Head of caudate nucleus (tissue), 42 donors: ENCODE measurements at regions of chr4 and their contacts with region 1.

Region 1: DNA sequence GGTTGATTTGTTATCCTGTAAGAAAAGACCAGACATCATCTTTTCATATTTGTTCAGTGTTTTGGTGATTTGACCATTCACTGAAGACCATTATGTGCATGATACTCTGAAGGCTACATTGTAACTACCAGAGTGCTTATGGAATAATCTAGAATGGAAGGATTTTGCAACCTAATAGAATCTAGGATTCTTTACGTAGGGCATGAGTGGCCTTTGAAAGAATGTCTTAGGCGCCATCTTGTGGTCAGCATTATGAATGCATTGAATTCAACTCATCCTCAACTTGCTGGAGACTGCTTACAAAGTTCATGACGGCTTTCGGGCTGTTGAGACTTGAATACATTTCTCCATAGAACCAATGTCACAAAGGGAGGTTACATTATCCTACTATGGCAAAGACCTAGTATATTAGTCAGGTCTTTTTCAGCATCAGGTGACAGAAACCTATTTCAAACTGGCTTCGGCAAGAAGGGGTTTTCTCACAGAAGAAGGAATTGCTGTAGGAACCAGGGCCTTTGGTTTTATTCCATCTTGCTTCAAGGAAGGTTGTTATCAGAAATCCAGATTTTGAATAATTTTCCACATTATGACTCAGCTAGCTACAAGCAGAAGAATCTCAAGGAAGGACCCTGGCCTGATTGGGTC is 104.1 kb downstream of the GPAT3 start:
- DNase-seq: peak in 32 of 42 donors; percentile 19 to 88 (median 66)

Region 2: DNA sequence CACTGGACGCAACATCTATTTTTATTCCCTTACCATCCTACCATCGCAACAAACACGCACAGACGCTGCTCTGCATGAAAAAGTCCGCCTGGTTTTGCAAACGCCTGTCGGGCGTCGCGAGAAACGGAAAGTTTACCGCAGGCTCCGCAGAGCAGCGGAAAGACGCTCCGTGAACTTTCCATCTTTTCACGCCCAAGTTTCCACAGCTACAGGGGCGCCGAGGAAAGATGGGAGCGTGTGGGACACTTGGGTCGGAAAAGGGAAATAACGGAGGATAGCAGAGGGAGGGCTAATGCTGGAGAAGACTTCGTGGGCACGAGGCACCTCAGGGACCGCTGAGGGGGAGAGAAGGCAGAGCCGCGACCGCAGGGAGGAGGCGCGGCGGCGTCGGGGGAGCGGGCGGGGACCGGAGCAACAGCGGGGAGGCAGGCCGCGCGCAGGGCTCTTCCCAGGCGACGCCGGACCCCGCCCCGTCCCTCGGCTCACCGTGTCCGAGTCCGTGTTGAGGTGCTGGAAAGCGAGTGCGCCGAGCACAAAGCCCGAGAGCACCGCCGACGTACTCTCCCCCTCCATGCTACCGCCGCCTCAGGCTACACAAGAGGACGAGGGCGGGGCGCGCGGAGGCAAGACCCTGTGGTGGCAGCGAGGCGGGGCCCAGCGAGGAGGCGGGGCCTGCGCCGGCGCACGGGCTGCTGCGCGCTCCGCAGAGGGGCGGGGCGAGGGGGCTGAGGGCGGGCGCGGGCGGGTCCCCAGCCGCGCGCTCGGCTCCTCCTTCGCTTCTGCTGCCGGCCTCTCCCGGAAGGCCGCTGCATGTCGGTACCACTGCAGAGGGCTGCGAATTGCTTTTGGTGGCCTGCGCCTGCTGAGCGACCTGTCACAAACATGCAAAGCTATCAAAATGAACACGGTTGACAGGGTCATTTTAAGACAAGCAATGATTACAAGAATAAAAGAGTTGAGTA is 155.2 kb before region 1 on chr4 and contains the start of gene ABRAXAS1:
- intact Hi-C with region 1: loop called (anchors 5 kb)
- DNase-seq: peak; percentile 83 to 98 (median 95)

Region 3: DNA sequence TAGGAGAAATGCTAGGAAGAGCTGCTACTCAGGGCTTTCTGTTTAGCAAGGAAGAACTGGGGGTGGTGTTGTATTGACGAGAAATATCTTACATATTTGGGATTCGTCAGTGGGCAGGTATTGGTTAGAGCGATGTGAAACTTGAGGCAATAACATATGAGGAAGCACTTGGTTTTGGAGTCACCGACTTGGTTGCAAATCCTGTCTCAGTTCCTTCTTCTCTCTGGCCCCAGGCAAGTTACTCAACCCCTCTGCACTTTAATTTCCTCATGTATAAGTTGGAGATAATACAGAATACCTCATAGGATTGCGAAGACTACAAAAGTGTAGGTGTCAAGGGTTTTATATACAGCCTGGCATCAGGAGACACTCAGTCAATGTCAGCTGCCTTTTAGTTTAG is 70.0 kb before region 1 on chr4:
- intact Hi-C with region 1: no loop called
- DNase-seq: peak in 2 of 42 donors; percentile 5 to 8

Region 4: DNA sequence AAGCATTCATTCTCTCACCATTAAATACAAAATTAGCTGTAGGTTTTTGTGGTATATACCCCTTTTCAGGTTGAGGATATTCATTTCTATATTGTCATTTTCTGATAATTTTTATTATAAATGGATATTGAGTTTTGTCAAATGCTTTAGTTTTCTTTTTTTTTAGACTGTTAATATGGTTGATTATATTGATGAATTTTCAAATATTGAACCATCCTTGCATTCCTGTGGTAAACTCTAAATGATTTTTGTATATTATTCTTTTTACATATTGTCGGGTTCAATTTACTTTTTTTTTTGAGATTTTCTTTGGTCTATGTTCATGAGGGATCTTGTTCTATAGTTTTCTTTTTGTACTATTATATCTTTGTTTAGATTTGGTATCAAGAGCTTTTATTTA is 61.1 kb after region 1 on chr4:
- intact Hi-C with region 1: no loop called
- DNase-seq: no peak

Region 5: GRCh38 chr4:84041426-84041825 is 401.5 kb after region 1 on chr4:
- intact Hi-C with region 1: no loop called
- DNase-seq: no peak

Region 6: GRCh38 chr4:84503495-84504437 is 863.8 kb after region 1 on chr4:
- intact Hi-C with region 1: loop called (anchors 5 kb)
- DNase-seq: peak in 15 of 42 donors; percentile 15 to 71 (median 41)